ENCODE measurements at regions of chr4 and their contacts with region 1.

Region 1: GRCh38 chr4:13484122-13484748 is at the start of gene RAB28:
- DNase-seq: peak; percentile 98
- ATAC-seq: peak; percentile 92
- H3K4me3 ChIP-seq: peak within 1 kb of the TSS; percentile 81 to 93 (median 86)
- H3K4me3 Mint-ChIP-seq: peak within 1 kb of the TSS; percentile 94
- H3K27ac ChIP-seq: peak within 1 kb of the TSS; percentile 97 to 99
- H3K27ac Mint-ChIP-seq: peak within 1 kb of the TSS; percentile 99
- H3K4me1 ChIP-seq: peaks cover 15 to 17% of the 10 kb centered on the region in 2 donors
- H3K4me1 Mint-ChIP-seq: peaks cover 22% of the 10 kb centered on the region
- H3K27me3 ChIP-seq: peaks cover 0 to 16% (median 7%) of the 10 kb centered on the region in 4 experiments
- H3K27me3 Mint-ChIP-seq: peaks cover 20% of the 10 kb centered on the region
- CTCF ChIP-seq: no peak
- total RNA-seq, gene RAB28: 17.4 and 18.7 TPM in 2 replicates

Region 2: GRCh38 chr4:13548984-13549546 is 64.8 kb after region 1 on chr4:
- CTCF ChIA-PET with region 1: no interaction called
- POLR2A ChIA-PET with region 1: no interaction called
- intact Hi-C with region 1: loop called (anchors 1 kb)
- DNase-seq: peak; percentile 86
- ATAC-seq: peak; percentile 65
- H3K4me3 ChIP-seq: peak overlapping the region; percentile 3 to 41 (median 31)
- H3K4me3 Mint-ChIP-seq: peak overlapping the region; percentile 77
- H3K27ac ChIP-seq: no peak overlapping the region
- H3K27ac Mint-ChIP-seq: peak overlapping the region; percentile 55
- H3K4me1 ChIP-seq: peaks cover 40 to 44% of the 10 kb centered on the region in 2 donors
- H3K4me1 Mint-ChIP-seq: peaks cover 31% of the 10 kb centered on the region
- H3K27me3 ChIP-seq: peaks cover 2 to 59% (median 47%) of the 10 kb centered on the region in 4 experiments
- H3K27me3 Mint-ChIP-seq: peaks cover 65% of the 10 kb centered on the region
- CTCF ChIP-seq: peak; percentile 89

Region 3: GRCh38 chr4:13611283-13611842 is 127.1 kb after region 1 on chr4:
- CTCF ChIA-PET with region 1: no interaction called
- POLR2A ChIA-PET with region 1: no interaction called
- intact Hi-C with region 1: loop called (anchors 5 kb)
- DNase-seq: peak; percentile 83
- ATAC-seq: peak; percentile 92
- H3K4me3 ChIP-seq: peak overlapping the region in 1 of 5 experiments; percentile 47
- H3K4me3 Mint-ChIP-seq: peak overlapping the region; percentile 71
- H3K27ac ChIP-seq: peak overlapping the region; percentile 84 to 92
- H3K27ac Mint-ChIP-seq: peak overlapping the region; percentile 88
- H3K4me1 ChIP-seq: peaks cover 48 to 55% of the 10 kb centered on the region in 2 donors
- H3K4me1 Mint-ChIP-seq: peaks cover 54% of the 10 kb centered on the region
- H3K27me3 ChIP-seq: no peaks in the 10 kb centered on the region
- H3K27me3 Mint-ChIP-seq: no peaks in the 10 kb centered on the region
- CTCF ChIP-seq: no peak